HCT116 (cell line): ENCODE measurements at regions of chr12 and their contacts with region 1.

Region 1: DNA sequence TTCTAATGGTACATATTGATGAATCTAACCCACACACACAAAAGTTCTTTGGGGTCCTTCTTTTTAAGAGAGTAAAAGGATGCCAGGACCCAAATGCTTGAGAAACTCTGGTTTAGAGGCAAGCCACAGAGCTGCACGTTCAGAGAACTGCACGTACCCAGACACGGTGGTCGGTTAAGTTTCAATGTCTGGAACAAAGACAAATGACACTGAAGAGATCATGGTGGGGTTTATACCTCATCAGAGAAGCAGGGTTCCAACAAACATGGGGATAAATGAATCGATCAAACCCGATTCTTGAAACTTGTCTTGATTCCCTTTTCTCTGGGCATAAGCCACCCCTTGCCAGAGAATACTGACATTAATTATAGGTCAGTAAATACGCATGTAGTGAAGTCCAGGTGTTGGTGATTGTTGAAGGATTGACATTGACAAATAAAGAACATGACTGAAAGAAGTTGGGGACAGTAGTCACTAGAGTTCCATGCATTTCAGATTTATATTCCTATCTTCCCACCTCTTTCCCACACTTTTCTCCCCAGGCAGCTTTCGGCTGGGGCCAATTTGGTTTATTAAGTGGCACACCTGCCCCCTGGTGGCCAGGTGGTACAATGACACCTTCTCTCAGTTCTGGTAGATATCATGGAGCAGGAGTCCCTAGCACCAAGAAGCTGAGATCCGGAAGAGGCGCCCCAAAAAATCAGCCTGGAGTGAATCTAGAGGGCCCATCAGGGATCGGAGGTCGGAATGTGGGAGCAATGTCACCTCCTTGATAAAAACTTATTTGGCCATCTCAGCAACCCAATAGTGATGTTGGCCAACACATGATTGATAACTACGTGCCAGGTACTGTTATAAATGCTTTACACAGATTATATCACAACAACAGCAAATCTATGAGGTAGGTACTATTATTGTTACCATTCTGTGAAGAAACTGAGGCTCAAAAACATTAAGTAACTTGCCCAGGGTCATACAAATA is 17.8 kb upstream of the HDAC7 start:
- DNase-seq: peak; percentile 66
- ATAC-seq: peak; percentile 76
- H3K4me3 ChIP-seq: no peak overlapping the region
- H3K27ac ChIP-seq: no peak overlapping the region
- H3K4me1 ChIP-seq: peaks cover 10 to 25% of the 10 kb centered on the region in 2 experiments; a peak in 2 of 4 replicates
- H3K27me3 ChIP-seq: no peaks in the 10 kb centered on the region
- CTCF ChIP-seq: peak; percentile 82 to 96 (median 95)
- POLR2A ChIP-seq: no peak
- RAD21 ChIP-seq: peak; percentile 95

Region 2: GRCh38 chr12:47547085-47547484 is 290.4 kb before region 1 on chr12:
- CTCF ChIA-PET with region 1: interaction called, 6 read pairs
- POLR2A ChIA-PET with region 1: no interaction called
- RAD21 ChIA-PET with region 1: no interaction called
- intact Hi-C with region 1: loop called (anchors 5 kb)
- DNase-seq: no peak
- ATAC-seq: peak; percentile 82
- H3K4me3 ChIP-seq: no peak overlapping the region
- H3K27ac ChIP-seq: no peak overlapping the region
- H3K4me1 ChIP-seq: no peaks in the 10 kb centered on the region
- H3K27me3 ChIP-seq: no peaks in the 10 kb centered on the region
- CTCF ChIP-seq: peak; percentile 49 to 58 (median 57); a peak in 5 of 6 replicates
- POLR2A ChIP-seq: no peak
- RAD21 ChIP-seq: peak; percentile 64

Region 3: DNA sequence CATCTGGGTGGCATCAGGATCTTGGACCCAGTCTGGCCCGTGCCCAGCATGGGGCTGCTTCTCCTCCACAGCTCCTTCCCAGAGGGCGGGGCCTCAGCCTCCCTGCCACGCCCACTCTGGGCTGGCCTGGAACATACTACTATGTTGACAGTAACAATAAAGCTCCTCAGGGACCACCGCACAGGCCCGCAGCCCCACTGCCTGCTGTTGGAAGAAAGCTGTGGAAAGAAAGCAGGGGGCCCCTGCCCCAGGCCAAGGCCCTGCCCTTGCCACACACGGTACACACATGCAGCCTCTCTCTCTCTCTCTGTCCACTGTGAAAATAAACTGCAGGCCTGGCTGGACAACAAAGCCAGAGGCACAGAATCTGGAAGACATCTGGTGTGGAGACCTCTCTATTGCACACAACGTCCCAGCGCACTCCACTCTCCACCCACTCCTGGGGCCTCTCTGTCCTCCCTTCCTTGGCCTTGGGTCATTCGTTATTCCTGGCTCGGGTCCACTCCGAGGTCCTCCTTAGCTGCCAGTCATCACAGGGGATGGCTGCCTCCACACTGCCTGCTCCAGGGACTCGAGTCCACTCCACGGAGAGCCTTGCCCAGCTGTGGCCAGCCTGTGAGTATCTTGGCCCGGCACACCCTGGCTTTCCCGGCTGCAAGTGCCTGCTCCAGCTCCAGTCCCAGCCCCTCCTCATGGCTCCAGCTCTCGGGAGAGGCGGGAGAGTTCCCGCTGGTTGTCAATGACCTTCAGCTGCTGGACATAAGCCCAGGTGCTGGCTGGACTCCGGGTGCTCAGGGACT is 100.4 kb before region 1 on chr12:
- CTCF ChIA-PET with region 1: interaction called, 164 read pairs
- POLR2A ChIA-PET with region 1: interaction called, 3 read pairs
- RAD21 ChIA-PET with region 1: interaction called, 13 to 15 read pairs
- intact Hi-C with region 1: no loop called
- DNase-seq: no peak
- ATAC-seq: peak; percentile 53
- H3K4me3 ChIP-seq: no peak overlapping the region
- H3K27ac ChIP-seq: no peak overlapping the region; the same call in 1 of the 2 replicates
- H3K4me1 ChIP-seq: peaks cover 25 to 35% of the 10 kb centered on the region in 2 experiments
- H3K27me3 ChIP-seq: no peaks in the 10 kb centered on the region
- CTCF ChIP-seq: no peak
- POLR2A ChIP-seq: no peak
- RAD21 ChIP-seq: no peak

Region 4: DNA sequence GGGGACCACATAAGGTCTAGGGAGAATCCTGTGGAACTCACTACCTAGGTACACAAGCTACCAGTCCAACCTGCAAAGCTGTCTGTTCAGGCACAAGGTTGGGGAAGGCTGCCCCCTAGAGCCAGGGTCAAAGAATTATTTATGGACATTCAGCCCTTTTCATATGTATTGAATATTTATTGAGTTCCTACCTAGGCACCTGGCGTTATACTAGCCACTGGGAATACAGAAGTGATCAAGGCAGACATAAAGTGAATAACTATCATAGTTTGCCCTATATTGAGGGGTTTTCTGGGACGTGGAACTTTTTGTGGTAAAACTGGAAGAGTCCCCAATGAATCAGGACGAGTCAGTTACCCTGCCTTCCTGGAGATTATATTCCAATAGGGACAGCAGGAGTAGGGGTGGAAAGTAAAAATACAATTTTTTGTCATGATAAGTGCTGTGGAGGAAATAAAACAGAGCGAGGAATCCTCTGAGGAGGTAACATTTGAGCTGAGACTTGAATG is 70.2 kb before region 1 on chr12:
- CTCF ChIA-PET with region 1: interaction called, 28 read pairs
- POLR2A ChIA-PET with region 1: no interaction called
- RAD21 ChIA-PET with region 1: interaction called in 1 of 2 experiments, 7 read pairs
- intact Hi-C with region 1: no loop called
- DNase-seq: peak; percentile 52
- ATAC-seq: peak; percentile 83
- H3K4me3 ChIP-seq: no peak overlapping the region
- H3K27ac ChIP-seq: no peak overlapping the region
- H3K4me1 ChIP-seq: peaks cover 12 to 24% of the 10 kb centered on the region in 2 experiments
- H3K27me3 ChIP-seq: no peaks in the 10 kb centered on the region
- CTCF ChIP-seq: peak; percentile 71 to 90 (median 71)
- POLR2A ChIP-seq: no peak
- RAD21 ChIP-seq: peak; percentile 90

Region 5: GRCh38 chr12:47785036-47785886 is 52.2 kb before region 1 on chr12:
- CTCF ChIA-PET with region 1: interaction called, 10 read pairs
- POLR2A ChIA-PET with region 1: no interaction called
- RAD21 ChIA-PET with region 1: interaction called in 1 of 2 experiments, 4 read pairs
- intact Hi-C with region 1: no loop called
- DNase-seq: no peak
- ATAC-seq: peak; percentile 22; the same call in 1 of the 2 replicates
- H3K4me3 ChIP-seq: no peak overlapping the region
- H3K27ac ChIP-seq: no peak overlapping the region
- H3K4me1 ChIP-seq: no peaks in the 10 kb centered on the region
- H3K27me3 ChIP-seq: no peaks in the 10 kb centered on the region
- CTCF ChIP-seq: no peak
- POLR2A ChIP-seq: no peak
- RAD21 ChIP-seq: no peak

Region 6: DNA sequence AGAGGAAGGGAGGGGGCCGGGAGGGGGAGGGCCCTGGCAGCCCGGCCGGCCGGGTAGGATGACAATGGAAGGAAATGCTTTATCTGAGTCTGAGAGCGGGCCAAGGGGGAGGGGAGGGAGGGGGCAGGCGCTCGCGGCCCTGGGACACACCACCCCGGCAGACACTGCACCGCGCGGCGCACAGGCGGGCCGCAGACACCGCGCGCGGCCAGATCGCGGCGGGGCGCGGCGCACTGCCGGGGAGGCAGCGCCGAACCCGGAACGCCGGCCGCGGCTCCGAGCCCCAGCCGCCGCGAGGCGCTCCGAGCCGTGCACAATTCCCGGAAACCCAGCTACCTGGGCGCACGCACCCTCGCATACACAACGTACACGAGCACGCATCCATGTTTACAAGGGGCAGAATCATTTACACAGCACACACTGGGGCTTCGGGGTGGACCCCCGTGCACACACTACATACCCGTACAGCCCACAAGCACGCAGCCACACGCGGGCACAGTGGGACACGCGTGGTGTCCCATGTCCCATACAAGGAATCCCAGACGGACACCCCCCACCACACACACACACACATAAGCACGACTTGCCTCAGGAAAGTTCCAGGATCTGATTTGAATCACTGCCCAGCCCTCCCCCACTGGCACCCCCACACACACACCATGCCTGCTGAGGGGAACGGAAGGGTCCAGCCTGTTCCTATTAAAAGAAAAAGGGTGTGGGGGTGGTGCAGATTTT is 17.4 kb before region 1 on chr12 and contains the start of gene HDAC7:
- CTCF ChIA-PET with region 1: interaction called, 26 read pairs
- POLR2A ChIA-PET with region 1: interaction called, 10 read pairs
- RAD21 ChIA-PET with region 1: interaction called in 1 of 2 experiments, 3 read pairs
- intact Hi-C with region 1: no loop called
- DNase-seq: peak; percentile 24
- ATAC-seq: peak; percentile 69
- H3K4me3 ChIP-seq: peak within 1 kb of the TSS; percentile 70 to 86
- H3K27ac ChIP-seq: peak within 1 kb of the TSS; percentile 98
- H3K4me1 ChIP-seq: peaks cover 38 to 74% of the 10 kb centered on the region in 2 experiments
- H3K27me3 ChIP-seq: no peaks in the 10 kb centered on the region
- CTCF ChIP-seq: no peak
- POLR2A ChIP-seq: peak; percentile 68
- RAD21 ChIP-seq: no peak
- total RNA-seq, gene HDAC7: 38.1 TPM

Region 7: GRCh38 chr12:48078901-48079300 is 241.4 kb after region 1 on chr12:
- CTCF ChIA-PET with region 1: no interaction called
- POLR2A ChIA-PET with region 1: no interaction called
- RAD21 ChIA-PET with region 1: no interaction called
- intact Hi-C with region 1: no loop called
- DNase-seq: no peak
- ATAC-seq: no peak
- H3K4me3 ChIP-seq: no peak overlapping the region
- H3K27ac ChIP-seq: no peak overlapping the region
- H3K4me1 ChIP-seq: no peaks in the 10 kb centered on the region
- H3K27me3 ChIP-seq: no peaks in the 10 kb centered on the region
- CTCF ChIP-seq: no peak
- POLR2A ChIP-seq: no peak
- RAD21 ChIP-seq: no peak